ENCODE measurements at regions of chr14 and their contacts with region 1.

Region 1: GRCh38 chr14:37428946-37429345 is 166.1 kb downstream of the FOXA1 start:
- DNase-seq: no peak
- H3K4me3 ChIP-seq: no peak overlapping the region
- H3K27ac ChIP-seq: no peak overlapping the region
- H3K4me1 ChIP-seq: no peaks in the 10 kb centered on the region
- H3K27me3 ChIP-seq: no peaks in the 10 kb centered on the region
- CTCF ChIP-seq: no peak

Region 2: GRCh38 chr14:37565550-37565949 is 136.6 kb after region 1 on chr14:
- intact Hi-C with region 1: loop called (anchors 10 kb)
- DNase-seq: no peak
- H3K4me3 ChIP-seq: no peak overlapping the region
- H3K27ac ChIP-seq: peak overlapping the region; percentile 80
- H3K4me1 ChIP-seq: peaks cover 5% of the 10 kb centered on the region
- H3K27me3 ChIP-seq: no peaks in the 10 kb centered on the region
- CTCF ChIP-seq: no peak